HEK293T (cell line): ENCODE measurements at regions of chr20 and their contacts with region 1.

Region 1: DNA sequence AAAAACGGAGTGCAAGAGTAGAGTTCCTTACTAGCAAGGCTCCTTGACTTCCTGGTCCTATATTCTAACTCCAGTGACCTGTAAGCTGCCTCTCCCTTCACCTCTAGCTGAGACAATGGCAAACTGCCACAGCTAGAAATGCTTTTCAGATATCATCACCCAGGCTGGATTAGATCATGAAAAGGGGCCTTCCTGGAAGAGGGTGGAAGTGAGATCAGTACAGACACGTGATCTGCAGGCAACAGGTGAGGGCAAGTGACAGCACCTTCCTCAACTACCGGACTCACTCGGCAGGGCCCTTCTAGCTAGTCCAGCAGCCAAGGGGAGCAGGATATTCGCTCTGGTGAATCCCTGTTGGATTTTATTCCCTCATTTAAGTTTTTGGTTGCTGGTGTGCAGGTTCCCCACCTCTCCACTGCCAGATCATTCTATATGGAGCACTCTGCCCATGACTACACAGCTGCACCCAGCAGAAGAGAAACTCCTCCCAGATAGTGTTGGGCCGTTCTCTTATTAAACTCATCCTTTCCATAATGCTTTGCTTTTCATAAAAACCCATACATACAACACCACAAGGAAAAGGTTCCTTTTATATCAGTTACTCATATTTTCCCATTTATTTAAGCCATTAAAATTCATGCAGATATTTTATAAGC is 26.4 kb upstream of the FAM83C start:
- DNase-seq: no peak

Region 2: DNA sequence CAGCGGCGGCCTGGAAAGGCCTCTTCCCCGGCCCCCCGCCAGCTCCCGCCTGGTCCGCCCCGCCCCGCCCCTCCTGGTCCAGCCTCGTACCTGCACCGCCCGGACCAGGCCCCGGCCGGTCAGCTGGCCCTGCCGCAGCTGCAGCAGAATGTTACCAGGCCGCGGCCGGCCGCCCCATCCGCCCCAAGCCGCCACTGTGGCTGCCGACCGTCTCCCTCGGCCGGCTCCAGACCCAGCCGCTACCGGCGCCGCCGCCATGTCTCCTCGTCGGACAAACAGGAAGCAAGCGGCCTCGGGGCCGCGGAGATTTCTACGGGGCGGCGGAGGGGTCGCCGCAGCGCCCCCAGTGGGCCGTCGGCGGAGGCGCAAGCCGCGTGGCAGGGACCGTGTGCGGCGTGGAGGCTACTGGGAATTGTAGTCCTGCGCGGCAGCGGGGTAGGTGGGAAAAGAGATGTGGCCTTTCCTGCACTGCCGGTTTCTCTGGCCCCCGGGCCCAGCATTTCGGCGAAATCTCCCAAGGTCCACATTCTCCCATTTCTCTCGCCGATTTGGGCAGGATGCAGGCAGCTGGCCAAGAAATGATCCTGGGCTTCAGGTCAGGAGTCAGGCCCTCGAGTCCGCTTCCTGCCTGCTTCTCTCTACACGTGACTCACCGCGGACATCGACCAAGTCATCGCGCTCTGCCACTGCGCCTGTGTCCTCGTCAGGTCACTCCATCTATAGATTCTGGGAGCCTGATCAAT is 225.9 kb before region 1 on chr20 and contains the start of gene TRPC4AP:
- CTCF ChIA-PET with region 1: interaction called, 11 read pairs
- POLR2A ChIA-PET with region 1: no interaction called
- DNase-seq: peak; percentile 88

Region 3: GRCh38 chr20:35303735-35304491 is 14.7 kb before region 1 on chr20:
- CTCF ChIA-PET with region 1: interaction called, 17 read pairs
- POLR2A ChIA-PET with region 1: interaction called, 4 read pairs
- DNase-seq: peak; percentile 85

Region 4: DNA sequence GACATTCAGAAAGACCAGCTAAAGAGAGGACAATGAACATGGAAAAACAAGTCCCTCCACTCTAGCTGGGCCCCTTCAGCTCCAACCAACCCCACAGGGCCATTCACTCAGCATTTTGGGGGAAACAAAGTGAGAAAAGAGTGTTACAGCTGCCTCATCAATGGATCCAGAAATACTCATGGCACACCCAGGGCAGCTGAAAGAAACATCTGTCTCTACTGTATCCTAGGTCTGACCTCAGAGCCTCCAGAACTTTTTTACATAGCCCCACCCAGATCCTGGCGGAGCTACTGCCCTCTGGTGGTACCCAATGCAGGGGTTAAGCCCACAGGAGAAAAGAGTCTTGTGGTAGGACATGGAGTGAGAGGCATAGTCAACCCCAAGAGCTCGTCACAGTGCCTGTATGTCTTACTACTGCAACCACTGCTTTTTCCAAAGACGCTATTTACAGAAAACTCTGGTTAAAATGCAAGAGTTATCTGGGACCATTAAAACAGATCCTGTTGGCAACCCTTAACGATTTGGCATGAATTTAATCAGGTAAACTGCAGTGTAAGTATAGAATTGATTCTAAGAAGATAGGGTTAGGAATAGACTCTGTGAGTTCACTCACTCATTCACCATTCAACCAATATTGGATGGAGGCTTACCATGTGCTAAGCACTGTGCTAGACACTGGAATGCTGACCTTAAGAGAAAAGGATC is 11.0 kb after region 1 on chr20:
- CTCF ChIA-PET with region 1: interaction called, 27 read pairs
- POLR2A ChIA-PET with region 1: interaction called, 6 read pairs
- DNase-seq: peak; percentile 71

Region 5: GRCh38 chr20:35454881-35455609 is 136.4 kb after region 1 on chr20 and contains the start of gene CEP250:
- CTCF ChIA-PET with region 1: no interaction called
- POLR2A ChIA-PET with region 1: interaction called, 14 read pairs
- DNase-seq: peak; percentile 96